ENCODE measurements at regions of chrX and their contacts with region 1.

Region 1: GRCh38 chrX:119871599-119872395 is at the starts of genes NDUFA1 and RNF113A:
- DNase-seq: peak; percentile 85
- ATAC-seq: peak; percentile 98 to 99
- total RNA-seq, gene NDUFA1: 382 to 451 TPM
- total RNA-seq, gene RNF113A: 8.9 to 10.9 TPM

Region 2: GRCh38 chrX:119791438-119792231 is 80.2 kb before region 1 on chrX and contains the start of gene RPL39:
- intact Hi-C with region 1: loop called in 1 of 2 experiments (anchors 2 kb)
- DNase-seq: peak; percentile 89
- ATAC-seq: peak; percentile 96 to 98
- total RNA-seq, gene RPL39: 1,171 to 1,199 TPM

Measured in left cardiac atrium (tissue), 4 donors.